GM23248 (cell line): ENCODE measurements at regions of chr6 and their contacts with region 1.

Region 1: DNA sequence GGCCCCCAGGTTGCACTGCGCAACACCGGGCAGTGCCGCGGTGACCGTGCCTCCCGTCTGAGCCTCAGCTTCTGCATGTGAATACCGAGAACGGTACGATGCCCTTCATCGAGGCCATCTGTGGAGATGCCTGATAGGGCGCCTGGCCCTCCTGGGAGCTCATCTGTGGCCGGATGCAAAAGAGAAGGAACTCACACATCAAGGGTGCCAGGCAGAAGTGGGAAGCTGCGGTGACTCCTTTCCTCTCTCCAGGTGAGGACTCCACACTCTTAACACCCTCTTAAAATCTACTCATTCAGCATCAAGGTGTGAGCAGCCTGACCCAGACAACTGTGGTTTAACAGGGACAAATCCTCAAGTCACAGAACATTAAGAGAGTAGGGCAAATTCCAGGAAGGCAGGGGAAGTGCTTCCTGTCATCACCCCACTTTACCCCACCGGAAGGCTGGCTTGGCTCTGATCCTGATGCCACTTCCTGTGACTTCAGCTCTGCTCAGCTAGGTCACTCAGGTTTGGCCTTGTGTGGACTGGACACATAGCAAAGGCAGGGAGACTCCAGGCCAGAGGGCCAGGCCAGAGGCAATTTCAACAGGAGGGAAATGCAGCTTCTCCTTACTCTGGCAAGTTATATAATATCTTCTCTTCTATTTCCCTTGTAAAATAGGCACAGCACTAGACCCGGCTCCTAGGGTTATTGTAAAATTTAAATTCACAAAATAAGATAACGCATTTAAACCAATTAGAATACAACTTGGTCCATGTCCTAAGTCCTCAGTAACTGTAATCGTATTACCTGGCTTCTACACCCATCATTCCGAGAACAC is 69.4 kb downstream of the CPNE5 start:
- DNase-seq: peak; percentile 51
- H3K4me3 ChIP-seq: no peak overlapping the region
- H3K27ac ChIP-seq: 0 out of 2 replicates have a peak overlapping the region, but pooled peaks have one; percentile 2
- H3K4me1 ChIP-seq: peaks cover 14% of the 10 kb centered on the region
- H3K27me3 ChIP-seq: no peaks in the 10 kb centered on the region

Region 2: DNA sequence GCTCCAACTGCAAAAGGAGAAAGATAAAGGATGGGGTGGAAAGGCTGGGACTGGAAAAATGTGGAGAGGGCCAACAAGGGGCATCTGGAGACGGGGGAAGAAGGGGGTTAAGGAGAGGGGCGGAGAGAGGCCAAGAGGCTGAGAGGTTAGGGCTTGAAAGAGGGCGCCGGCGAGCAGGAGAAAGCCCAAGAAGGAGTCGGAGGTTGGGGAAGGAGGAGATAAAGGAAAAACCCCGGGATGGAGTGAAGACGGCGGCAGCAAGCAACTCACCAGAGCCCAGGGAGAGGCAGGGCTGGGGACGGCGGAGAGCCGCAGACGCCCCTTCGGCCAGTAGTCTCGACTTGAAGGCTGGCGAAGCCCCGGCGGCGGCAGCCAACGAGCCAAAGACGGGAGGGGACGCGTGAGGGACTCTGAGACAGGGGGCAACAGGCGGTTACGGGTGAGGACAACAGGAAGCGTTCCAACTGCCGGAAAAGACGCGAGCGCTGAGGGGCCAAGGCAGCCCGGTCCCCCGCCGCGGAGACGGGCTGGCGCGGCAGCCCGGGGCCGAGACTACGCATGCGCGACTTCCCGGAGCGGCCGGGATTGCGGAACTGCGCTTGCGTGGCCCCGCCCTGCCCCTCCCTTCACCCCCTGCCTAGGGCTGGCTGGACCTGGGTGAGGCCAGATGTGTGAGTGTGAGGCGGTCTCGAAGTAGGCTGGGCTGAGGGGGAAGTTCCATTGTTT is 222.8 kb before region 1 on chr6 and contains the start of gene STK38:
- in situ Hi-C with region 1: no loop called
- DNase-seq: peak; percentile 94
- H3K4me3 ChIP-seq: peak within 1 kb of the TSS; percentile 100
- H3K27ac ChIP-seq: peak within 1 kb of the TSS; percentile 77
- H3K4me1 ChIP-seq: peaks cover 28% of the 10 kb centered on the region
- H3K27me3 ChIP-seq: no peaks in the 10 kb centered on the region
- total RNA-seq, gene STK38: 30.5 and 35.6 TPM in 2 replicates

Region 3: GRCh38 chr6:37005061-37005810 is 235.3 kb after region 1 on chr6 and contains the start of gene FGD2:
- in situ Hi-C with region 1: loop called (anchors 10 kb)
- DNase-seq: no peak
- H3K4me3 ChIP-seq: no peak within 1 kb of the TSS
- H3K27ac ChIP-seq: no peak within 1 kb of the TSS
- H3K4me1 ChIP-seq: 0 out of 2 replicates have a peak, but pooled peaks cover 7% of the 10 kb centered on the region
- H3K27me3 ChIP-seq: no peaks in the 10 kb centered on the region
- total RNA-seq, gene FGD2: not detected in 2 replicates

Region 4: DNA sequence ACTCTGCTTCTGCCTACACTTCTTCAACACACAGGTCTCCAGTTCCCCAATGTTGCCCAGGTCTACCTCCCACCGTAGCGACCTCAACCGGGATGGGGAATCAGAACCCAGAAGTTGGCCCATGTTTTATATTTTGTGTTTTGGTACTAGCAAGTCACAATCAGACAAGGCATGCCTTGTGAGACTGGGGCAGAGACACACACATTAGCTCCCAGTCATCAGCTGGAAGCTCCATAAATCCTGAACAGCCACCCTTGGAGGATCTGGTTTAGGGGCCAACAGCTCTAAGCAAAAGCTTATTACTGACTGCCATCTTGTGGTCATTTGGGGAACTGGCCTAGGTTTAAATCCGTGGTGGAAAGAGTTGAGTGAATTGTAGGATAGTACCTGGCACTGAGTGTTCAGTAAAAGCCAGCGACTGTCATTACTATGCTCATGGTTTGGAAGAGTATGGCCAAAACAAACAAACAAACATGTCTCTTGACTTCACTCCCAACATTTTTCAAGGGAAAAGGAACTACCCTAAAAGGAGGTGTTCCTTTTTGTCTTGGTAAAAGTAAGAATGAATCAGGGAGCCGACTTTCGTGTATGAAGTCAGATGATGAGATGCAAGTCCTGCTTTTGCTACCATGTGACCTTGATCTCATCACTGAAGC is 440.6 kb after region 1 on chr6:
- in situ Hi-C with region 1: loop called (anchors 10 kb)
- DNase-seq: peak; percentile 83
- H3K4me3 ChIP-seq: no peak overlapping the region
- H3K27ac ChIP-seq: no peak overlapping the region
- H3K4me1 ChIP-seq: no peaks in the 10 kb centered on the region
- H3K27me3 ChIP-seq: no peaks in the 10 kb centered on the region